SK-N-SH (cell line): ENCODE measurements at regions of chr11 and their contacts with region 1.

Region 1: DNA sequence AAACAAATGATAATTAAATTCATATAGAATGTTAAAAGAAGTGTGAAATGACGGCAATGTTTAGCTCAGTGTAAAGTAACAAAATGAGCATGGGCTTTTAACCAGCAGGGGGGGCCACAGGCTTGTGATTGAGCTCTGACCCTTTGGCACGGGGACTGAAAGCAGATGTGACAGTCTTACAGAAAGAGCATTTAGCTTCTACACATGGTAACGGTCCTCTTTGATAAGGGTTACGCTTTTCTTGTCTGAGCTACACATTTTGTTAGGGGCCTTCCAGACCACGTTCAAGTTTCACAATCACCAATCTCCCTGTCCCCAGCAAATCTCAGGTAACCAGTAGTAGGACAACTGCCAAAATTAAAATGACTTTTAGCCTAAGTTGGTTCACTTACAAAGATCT is 262.5 kb downstream of the DCDC1 start:
- DNase-seq: peak; percentile 43
- H3K4me3 ChIP-seq: no peak overlapping the region; a peak in 1 of 4 replicates
- H3K27ac ChIP-seq: no peak overlapping the region
- H3K4me1 ChIP-seq: peaks cover 0 to 9% of the 10 kb centered on the region in 2 experiments; a peak in 1 of 4 replicates
- H3K27me3 ChIP-seq: no peaks in the 10 kb centered on the region; the same call in 1 of the 2 replicates
- CTCF ChIP-seq: peak; percentile 61
- EP300 ChIP-seq: no peak
- RAD21 ChIP-seq: peak; percentile 82

Region 2: GRCh38 chr11:31118566-31118965 is 11.5 kb after region 1 on chr11:
- CTCF ChIA-PET with region 1: interaction called, 21 read pairs
- POLR2A ChIA-PET with region 1: no interaction called
- DNase-seq: no peak
- H3K4me3 ChIP-seq: no peak overlapping the region
- H3K27ac ChIP-seq: no peak overlapping the region
- H3K4me1 ChIP-seq: no peaks in the 10 kb centered on the region
- H3K27me3 ChIP-seq: no peaks in the 10 kb centered on the region
- CTCF ChIP-seq: no peak
- EP300 ChIP-seq: no peak
- RAD21 ChIP-seq: no peak